Caco-2 (cell line): ENCODE measurements at regions of chr7 and their contacts with region 1.

Region 1: GRCh38 chr7:52184006-52184703 is 851.3 kb upstream of the POM121L12 start:
- DNase-seq: no peak
- H3K4me3 ChIP-seq: no peak overlapping the region
- H3K4me3 Mint-ChIP-seq: no peak overlapping the region
- H3K27ac Mint-ChIP-seq: no peak overlapping the region
- H3K4me1 ChIP-seq: no peaks in the 10 kb centered on the region
- H3K4me1 Mint-ChIP-seq: no peaks in the 10 kb centered on the region
- H3K27me3 ChIP-seq: no peaks in the 10 kb centered on the region
- H3K27me3 Mint-ChIP-seq: no peaks in the 10 kb centered on the region
- CTCF ChIP-seq: no peak

Region 2: DNA sequence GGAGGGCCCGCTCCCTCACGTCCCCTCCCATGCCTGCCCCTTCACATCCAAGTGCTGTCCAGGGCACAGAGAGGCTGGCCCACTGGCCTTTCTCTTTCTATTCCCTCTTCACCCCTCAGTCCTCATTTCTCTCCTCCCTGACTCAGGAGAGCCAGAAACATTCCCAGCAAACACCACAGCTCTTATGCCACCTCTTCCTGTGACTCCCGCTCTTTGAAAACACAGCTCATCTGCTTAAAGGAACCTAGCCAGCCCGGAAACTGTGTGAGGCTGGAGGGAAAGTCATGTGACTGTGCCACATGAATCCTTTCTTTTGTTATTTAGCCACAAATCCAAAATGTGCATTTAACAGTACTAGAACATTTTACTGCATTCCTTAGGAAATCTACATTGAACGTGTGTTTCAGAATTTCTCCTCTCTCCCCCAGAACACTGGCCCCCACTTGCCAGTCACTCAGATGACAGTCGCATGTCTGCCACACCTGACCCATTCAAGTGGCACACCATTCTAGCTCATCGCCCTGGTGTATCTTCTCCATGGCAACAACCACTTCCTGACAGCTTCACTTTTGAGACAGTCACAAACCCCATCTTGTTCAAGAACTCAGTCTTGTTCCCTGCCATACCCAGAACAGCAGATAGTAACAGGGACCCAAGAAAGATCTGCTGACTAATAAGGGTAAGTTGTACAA is 1444.3 kb before region 1 on chr7:
- CTCF ChIA-PET with region 1: no interaction called
- POLR2A ChIA-PET with region 1: no interaction called
- intact Hi-C with region 1: loop called (anchors 10 kb)
- DNase-seq: no peak
- H3K4me3 ChIP-seq: no peak overlapping the region
- H3K4me3 Mint-ChIP-seq: no peak overlapping the region
- H3K27ac Mint-ChIP-seq: peak overlapping the region; percentile 19
- H3K4me1 ChIP-seq: peaks cover 11% of the 10 kb centered on the region
- H3K4me1 Mint-ChIP-seq: peaks cover 25% of the 10 kb centered on the region
- H3K27me3 ChIP-seq: no peaks in the 10 kb centered on the region
- H3K27me3 Mint-ChIP-seq: no peaks in the 10 kb centered on the region
- CTCF ChIP-seq: no peak

Region 3: GRCh38 chr7:52302765-52303520 is 118.8 kb after region 1 on chr7:
- CTCF ChIA-PET with region 1: no interaction called
- POLR2A ChIA-PET with region 1: no interaction called
- intact Hi-C with region 1: no loop called
- DNase-seq: no peak
- H3K4me3 ChIP-seq: no peak overlapping the region
- H3K4me3 Mint-ChIP-seq: no peak overlapping the region
- H3K27ac Mint-ChIP-seq: no peak overlapping the region
- H3K4me1 ChIP-seq: no peaks in the 10 kb centered on the region
- H3K4me1 Mint-ChIP-seq: no peaks in the 10 kb centered on the region
- H3K27me3 ChIP-seq: no peaks in the 10 kb centered on the region
- H3K27me3 Mint-ChIP-seq: no peaks in the 10 kb centered on the region
- CTCF ChIP-seq: no peak